ENCODE measurements at regions of chr12 and their contacts with region 1.

Region 1: DNA sequence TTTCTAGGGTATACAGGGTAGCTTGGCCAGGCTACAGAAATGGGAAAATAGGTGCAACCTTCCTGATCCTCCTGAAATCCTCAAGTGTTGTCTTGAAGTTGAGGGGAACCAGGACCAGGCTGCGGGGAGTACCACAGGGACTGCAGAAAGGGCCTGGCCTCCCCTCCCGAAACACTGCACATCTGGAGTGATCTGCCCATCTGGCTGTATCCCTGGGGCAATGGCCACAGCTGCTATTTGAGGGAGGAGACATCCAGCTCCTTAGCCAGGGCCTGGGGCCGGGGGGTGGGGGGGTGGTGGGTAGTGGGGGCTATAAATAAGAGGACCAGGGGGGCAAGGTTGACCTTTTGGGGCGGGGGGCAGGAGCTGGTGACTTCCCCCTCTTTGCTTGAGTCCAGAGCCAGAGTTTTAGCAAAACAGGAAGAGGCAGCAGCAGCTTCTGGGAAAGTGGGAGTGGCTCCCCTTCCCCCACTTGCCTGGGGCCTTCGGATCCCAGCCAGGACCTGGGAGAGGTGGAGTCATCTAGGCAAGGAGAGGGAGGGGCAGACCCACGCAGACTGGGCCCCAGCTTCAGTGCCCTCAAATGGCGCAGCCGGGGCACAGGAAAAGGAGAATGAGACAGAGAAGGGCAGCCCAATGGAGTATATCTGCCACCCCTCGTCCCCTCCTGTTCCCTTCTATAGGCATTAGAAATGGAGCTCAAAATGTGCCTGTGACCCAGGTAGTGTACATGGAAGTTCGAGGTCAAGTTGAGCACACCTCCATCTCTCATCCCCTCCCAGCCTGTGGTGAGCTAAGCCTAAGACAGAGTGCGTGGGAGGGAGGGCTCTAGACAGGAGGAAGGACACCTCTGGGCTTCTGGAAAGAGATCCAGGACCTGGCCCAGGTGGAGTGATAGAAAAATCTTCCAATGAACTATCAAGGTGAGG is 9.2 kb upstream of the HDAC7 start:
- DNase-seq: no peak

Region 2: DNA sequence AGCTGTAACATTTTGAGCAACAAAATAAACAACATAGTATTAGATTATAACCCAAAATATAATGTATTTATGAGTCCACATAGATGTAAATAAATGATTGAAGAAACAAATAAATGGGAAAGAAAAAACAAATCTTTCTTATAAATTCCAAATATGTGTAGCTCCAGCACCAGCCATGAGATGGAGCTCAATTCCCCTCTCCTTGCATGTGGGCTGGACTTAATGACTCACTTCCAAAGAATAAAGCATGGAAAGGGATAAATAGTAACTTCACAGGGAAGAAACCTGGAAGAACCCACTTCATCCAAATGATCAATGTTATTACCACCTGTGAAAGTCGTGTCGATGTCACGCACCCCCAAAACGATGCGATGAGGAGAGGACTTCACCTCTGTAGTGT is 281.8 kb before region 1 on chr12:
- CTCF ChIA-PET with region 1: no interaction called
- POLR2A ChIA-PET with region 1: no interaction called
- DNase-seq: no peak

Region 3: DNA sequence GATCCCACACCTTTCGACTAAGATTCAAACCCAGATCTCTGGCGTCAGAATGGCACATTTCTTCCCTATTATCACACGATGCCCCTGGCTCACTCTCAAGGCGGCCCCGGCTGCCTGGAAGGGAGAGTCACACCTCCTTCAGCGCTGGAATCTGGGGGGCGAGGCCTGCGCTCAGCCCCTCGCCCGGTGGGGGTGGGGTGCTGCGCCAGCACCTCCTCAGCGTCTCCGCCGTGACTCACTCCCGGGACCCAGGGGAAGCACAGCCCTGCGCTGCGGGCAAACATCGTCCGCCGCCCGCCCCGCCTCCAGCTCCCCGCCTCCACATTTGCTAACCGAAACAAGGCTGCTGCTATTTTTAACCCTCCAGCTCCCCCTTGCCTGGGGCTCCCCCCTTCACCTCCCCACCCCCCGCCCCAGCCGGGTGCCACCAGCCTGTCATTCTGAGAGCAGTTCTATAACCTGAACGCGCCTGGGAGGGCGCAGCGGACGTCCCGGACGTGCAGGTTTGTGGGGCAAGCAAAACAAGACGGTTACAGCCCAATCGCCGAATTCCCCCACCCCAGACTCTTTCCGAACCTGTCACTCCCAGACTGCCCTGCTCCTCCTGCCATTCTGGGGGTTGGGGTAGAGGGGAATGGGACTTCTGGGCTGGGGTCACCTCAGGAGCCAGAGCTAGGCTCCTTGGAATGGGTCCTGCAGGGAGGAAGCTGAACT is 15.9 kb before region 1 on chr12:
- CTCF ChIA-PET with region 1: interaction called, 10 read pairs
- POLR2A ChIA-PET with region 1: interaction called, 32 read pairs
- DNase-seq: peak; percentile 58

Region 4: DNA sequence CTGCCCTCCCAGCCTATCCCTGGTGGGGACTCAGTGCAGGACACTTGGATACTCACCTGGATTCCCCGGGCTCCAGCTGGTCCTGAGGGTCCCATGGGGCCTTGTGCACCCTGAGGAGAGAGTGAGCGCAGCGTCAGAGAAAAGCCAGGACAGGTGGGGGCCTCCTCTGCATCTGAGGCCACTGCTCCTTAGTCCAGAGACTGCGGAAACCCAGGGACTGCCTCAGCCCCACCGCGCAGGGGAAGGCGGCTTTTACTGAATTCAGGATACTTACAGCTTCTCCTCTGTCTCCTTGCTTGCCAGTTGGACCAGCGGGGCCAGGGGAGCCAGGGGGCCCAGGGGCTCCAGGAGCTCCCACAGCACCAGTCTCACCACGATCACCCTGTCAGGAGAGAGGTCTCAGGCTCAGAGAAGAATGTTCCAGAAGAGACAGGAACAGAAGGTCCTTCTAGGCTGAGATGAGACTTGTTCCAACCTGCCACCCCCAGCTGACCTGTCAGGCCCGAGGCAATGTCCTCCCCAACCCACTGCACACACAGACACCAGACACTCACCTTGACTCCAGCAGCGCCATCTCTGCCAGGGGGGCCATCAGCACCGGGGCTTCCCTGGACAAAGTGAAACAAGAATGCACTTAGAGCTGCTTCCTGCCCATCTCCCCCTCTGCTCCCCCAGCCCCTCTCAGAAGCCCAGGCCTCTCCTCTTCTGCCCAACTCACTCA is 148.3 kb after region 1 on chr12:
- CTCF ChIA-PET with region 1: no interaction called
- POLR2A ChIA-PET with region 1: no interaction called
- DNase-seq: no peak